Breast epithelium (tissue), 4 donors: ENCODE measurements at regions of chr6 and their contacts with region 1.

Region 1: DNA sequence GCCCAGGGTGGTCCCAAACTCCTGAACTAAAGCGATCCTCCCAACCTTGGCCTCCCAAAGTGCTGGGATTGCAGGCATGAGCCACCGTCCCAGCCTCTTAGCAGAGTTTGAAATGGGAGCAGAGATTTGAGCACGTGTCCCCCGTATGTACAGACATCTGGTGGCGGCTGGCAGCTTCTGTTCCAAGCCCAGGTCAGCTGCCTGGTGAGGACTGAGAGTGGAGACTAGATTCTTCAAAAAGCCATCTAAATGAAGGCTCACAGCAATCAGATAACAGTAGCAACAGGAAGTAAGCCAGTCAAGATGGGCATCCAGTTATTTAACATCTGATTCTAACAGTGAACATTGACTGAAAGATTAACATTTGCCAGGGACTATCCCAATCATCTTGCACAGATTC is 128.1 kb upstream of the AKAP12 start:
- DNase-seq: no peak
- H3K4me3 ChIP-seq: no peak overlapping the region
- H3K27ac ChIP-seq: no peak overlapping the region
- H3K4me1 ChIP-seq: no peaks in the 10 kb centered on the region
- H3K27me3 ChIP-seq: no peaks in the 10 kb centered on the region
- CTCF ChIP-seq: no peak
- POLR2A ChIP-seq: no peak

Region 2: GRCh38 chr6:151044465-151045441 is 66.9 kb before region 1 on chr6:
- intact Hi-C with region 1: loop called (anchors 2 kb)
- DNase-seq: peak; percentile 40 to 58
- H3K4me3 ChIP-seq: no peak overlapping the region
- H3K27ac ChIP-seq: peak overlapping the region; percentile 4 to 71
- H3K4me1 ChIP-seq: no peaks in the 10 kb centered on the region
- H3K27me3 ChIP-seq: no peaks in the 10 kb centered on the region
- CTCF ChIP-seq: no peak
- POLR2A ChIP-seq: no peak